ENCODE measurements at regions of chr13 and their contacts with region 1.

Region 1: DNA sequence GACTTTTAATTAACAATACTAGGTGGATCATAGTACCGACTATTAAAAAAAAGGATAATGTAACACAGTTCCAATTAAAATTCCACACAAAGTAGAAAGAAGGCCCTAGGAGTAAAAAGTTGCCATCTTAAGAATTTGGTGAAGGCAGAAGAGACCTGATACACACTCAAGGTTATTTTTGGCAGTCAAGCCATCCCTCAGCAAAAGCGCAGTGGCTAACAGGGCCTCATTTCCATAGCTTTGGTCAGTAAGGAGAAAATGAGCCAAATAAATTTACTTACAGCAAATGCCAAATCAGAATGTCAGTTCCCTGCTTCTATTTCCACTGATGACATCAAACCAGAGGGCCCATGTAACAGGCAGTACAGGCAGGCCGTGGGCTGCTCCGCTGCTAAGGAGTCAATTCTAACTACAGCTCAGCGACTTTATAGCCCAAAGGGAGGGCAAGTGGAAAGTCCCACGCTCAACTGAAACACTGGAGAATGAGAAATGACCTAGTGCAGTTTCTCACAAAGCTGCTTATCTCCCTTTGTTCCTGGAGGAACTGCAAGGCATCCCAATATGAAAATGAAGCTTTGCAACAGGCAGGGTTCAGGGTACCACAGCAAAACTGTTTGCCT is 6.3 kb downstream of the ARGLU1 start:
- DNase-seq: peak; percentile 35
- H3K4me3 ChIP-seq: no peak overlapping the region
- H3K27ac ChIP-seq: no peak overlapping the region
- H3K4me1 ChIP-seq: peaks cover 18% of the 10 kb centered on the region
- H3K27me3 ChIP-seq: no peaks in the 10 kb centered on the region
- CTCF ChIP-seq: no peak

Region 2: GRCh38 chr13:104809483-104809882 is 1752.2 kb before region 1 on chr13:
- CTCF ChIA-PET with region 1: no interaction called
- dilution Hi-C with region 1: no loop called
- in situ Hi-C with region 1: no loop called
- intact Hi-C with region 1: loop called (anchors 5 kb)
- DNase-seq: peak; percentile 37
- H3K4me3 ChIP-seq: no peak overlapping the region
- H3K27ac ChIP-seq: no peak overlapping the region
- H3K4me1 ChIP-seq: no peaks in the 10 kb centered on the region
- H3K27me3 ChIP-seq: no peaks in the 10 kb centered on the region
- CTCF ChIP-seq: no peak